ENCODE measurements at regions of chr2 and their contacts with region 1.

Region 1: GRCh38 chr2:120312861-120313694 is 32.9 kb upstream of the INHBB start:
- DNase-seq: peak; percentile 69 to 70
- ATAC-seq: peak; percentile 86 to 92
- H3K4me3 ChIP-seq: peak overlapping the region; percentile 47 to 69 (median 50)
- H3K27ac ChIP-seq: peak overlapping the region; percentile 58 to 73 (median 72)
- H3K4me1 ChIP-seq: peaks cover 14 to 15% of the 10 kb centered on the region in 2 donors
- H3K27me3 ChIP-seq: no peaks in the 10 kb centered on the region
- CTCF ChIP-seq: peak; percentile 82 to 91 (median 82)
- POLR2A ChIP-seq: no peak

Region 2: GRCh38 chr2:120012771-120013596 is 300.1 kb before region 1 on chr2 and contains the start of gene EPB41L5:
- in situ Hi-C with region 1: no loop called
- intact Hi-C with region 1: loop called (anchors 10 kb)
- DNase-seq: peak; percentile 84 to 91
- ATAC-seq: peak; percentile 92 to 94
- H3K4me3 ChIP-seq: peak within 1 kb of the TSS; percentile 88 to 98 (median 95)
- H3K27ac ChIP-seq: peak within 1 kb of the TSS; percentile 89 to 97 (median 92)
- H3K4me1 ChIP-seq: peaks cover 13 to 25% of the 10 kb centered on the region in 2 donors
- H3K27me3 ChIP-seq: no peaks in the 10 kb centered on the region
- CTCF ChIP-seq: peak in 1 of 5 experiments; percentile 15
- POLR2A ChIP-seq: peak; percentile 84 to 92
- total RNA-seq, gene EPB41L5: 8.3 to 41.1 (median 12.7) TPM

Region 3: DNA sequence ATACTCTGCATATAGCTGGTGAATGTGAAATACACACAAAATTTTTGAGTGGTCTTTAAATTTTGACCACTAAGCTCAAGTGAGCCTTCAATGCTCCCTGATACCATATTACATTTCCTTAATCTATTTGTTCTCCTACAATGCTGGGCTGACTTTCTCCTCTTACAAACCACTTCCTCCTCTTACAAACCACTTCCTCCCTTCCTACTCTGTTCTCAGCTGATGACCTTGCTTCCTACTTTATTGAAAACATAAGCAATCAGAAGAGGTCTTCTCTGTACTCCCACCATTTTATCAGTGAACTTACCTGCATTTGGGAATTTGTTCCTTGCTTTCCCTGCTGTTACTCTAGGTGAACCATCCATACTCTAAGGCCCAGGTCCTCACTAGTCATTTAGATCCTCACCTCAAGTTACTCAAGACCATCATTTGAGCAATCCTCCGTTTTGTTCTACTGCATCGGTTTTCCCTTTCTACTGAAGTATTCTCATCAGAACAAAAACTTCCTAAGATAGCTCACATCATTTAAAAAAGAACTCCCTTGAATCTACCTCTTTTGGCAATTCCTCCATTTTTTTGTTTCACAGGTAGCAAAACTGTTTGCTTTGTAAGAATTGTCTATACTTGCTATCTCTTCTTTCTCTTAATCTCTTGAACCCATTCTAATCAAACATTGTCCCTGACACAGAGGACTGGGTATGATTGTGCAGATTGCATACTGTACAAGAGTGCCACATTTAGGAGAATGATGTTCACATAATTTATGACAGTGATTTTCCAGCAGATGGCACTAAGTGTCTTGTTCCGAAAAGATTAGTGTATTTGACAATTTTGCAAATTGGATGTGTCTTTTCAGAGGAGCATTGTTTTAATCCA is 203.7 kb before region 1 on chr2:
- in situ Hi-C with region 1: loop called in 1 of 4 experiments (anchors 25 kb)
- intact Hi-C with region 1: loop called (anchors 2 kb)
- DNase-seq: no peak
- ATAC-seq: no peak
- H3K4me3 ChIP-seq: no peak overlapping the region
- H3K27ac ChIP-seq: peak overlapping the region in 2 of 4 donors; percentile 7 to 78
- H3K4me1 ChIP-seq: peaks cover 28 to 33% of the 10 kb centered on the region in 2 donors
- H3K27me3 ChIP-seq: no peaks in the 10 kb centered on the region
- CTCF ChIP-seq: peak in 4 of 5 experiments; percentile 31 to 45 (median 38)
- POLR2A ChIP-seq: no peak

Region 4: GRCh38 chr2:120206022-120206581 is 107.0 kb before region 1 on chr2:
- in situ Hi-C with region 1: no loop called
- intact Hi-C with region 1: loop called (anchors 1 kb)
- DNase-seq: no peak
- ATAC-seq: no peak
- H3K4me3 ChIP-seq: no peak overlapping the region
- H3K27ac ChIP-seq: no peak overlapping the region
- H3K4me1 ChIP-seq: peaks cover 0 to 7% of the 10 kb centered on the region in 2 donors
- H3K27me3 ChIP-seq: no peaks in the 10 kb centered on the region
- CTCF ChIP-seq: peak in 2 of 5 experiments; percentile 43 to 54
- POLR2A ChIP-seq: no peak

Region 5: GRCh38 chr2:120223034-120223912 is 89.8 kb before region 1 on chr2 and contains the start of gene TMEM185B:
- in situ Hi-C with region 1: no loop called
- intact Hi-C with region 1: loop called (anchors 5 kb)
- DNase-seq: peak; percentile 74 to 86
- ATAC-seq: peak; percentile 96 to 97
- H3K4me3 ChIP-seq: peak within 1 kb of the TSS; percentile 70 to 78 (median 70)
- H3K27ac ChIP-seq: peak within 1 kb of the TSS; percentile 86 to 96 (median 90)
- H3K4me1 ChIP-seq: peaks cover 25% of the 10 kb centered on the region in 2 donors
- H3K27me3 ChIP-seq: no peaks in the 10 kb centered on the region
- CTCF ChIP-seq: peak in 3 of 5 experiments; percentile 20 to 41 (median 26)
- POLR2A ChIP-seq: peak; percentile 63 to 71
- total RNA-seq, gene TMEM185B: 10.8 to 23.5 (median 15.4) TPM

Region 6: GRCh38 chr2:120252225-120253021 is 60.7 kb before region 1 on chr2 and contains the start of gene RALB:
- in situ Hi-C with region 1: no loop called
- intact Hi-C with region 1: loop called (anchors 1 kb)
- DNase-seq: peak; percentile 98
- ATAC-seq: peak; percentile 89 to 90
- H3K4me3 ChIP-seq: peak within 1 kb of the TSS; percentile 67 to 87 (median 73)
- H3K27ac ChIP-seq: peak within 1 kb of the TSS; percentile 78 to 89 (median 82)
- H3K4me1 ChIP-seq: peaks cover 9 to 38% of the 10 kb centered on the region in 2 donors
- H3K27me3 ChIP-seq: no peaks in the 10 kb centered on the region
- CTCF ChIP-seq: no peak
- POLR2A ChIP-seq: peak; percentile 62 to 75
- total RNA-seq, gene RALB: 20.1 to 45.0 (median 30.4) TPM

Measured in gastrocnemius medialis (tissue), 4 donors.